A549 (cell line): ENCODE measurements at regions of chr4 and their contacts with region 1.

Region 1: GRCh38 chr4:158253350-158253980 is 43.2 kb downstream of the TMEM144 start:
- DNase-seq: peak; percentile 13 to 39
- ATAC-seq: peak; percentile 90 to 91
- H3K4me3 ChIP-seq: no peak overlapping the region
- H3K27ac ChIP-seq: no peak overlapping the region
- H3K4me1 ChIP-seq: no peaks in the 10 kb centered on the region
- CTCF ChIP-seq: peak; percentile 49
- EP300 ChIP-seq: no peak
- POLR2A ChIP-seq: no peak
- RAD21 ChIP-seq: peak; percentile 66 to 74

Region 2: DNA sequence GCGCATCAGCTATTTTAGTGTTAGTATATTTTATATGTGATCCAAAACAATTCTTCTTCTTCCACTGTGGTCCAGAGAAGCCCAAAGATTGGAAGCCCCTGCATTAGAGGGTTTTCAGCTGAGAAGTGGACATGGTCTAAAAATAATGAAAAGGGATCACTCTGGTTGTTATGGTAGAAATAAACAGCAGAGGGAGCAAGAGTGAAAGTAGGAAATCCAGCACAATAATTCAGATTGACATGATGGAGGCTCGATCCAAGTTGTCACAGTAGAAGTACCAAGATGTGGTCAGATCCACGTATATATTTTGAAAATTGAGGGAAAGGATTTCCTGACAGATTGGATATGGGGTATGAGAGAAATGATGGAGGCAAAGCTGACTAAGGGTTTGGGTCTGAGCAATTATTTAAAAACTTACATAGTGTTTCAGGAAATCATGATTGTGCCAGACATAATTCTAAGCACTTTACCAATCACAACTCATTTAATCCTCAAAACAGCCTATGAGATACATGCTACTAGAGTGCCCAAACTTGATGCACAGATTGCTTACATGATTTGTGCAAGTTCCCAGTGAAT is 60.2 kb before region 1 on chr4:
- CTCF ChIA-PET with region 1: interaction called, 14 read pairs
- POLR2A ChIA-PET with region 1: no interaction called
- DNase-seq: peak; percentile 28 to 43
- ATAC-seq: peak; percentile 74; a peak in 5 of 6 replicates
- H3K4me3 ChIP-seq: no peak overlapping the region
- H3K27ac ChIP-seq: no peak overlapping the region
- H3K4me1 ChIP-seq: no peaks in the 10 kb centered on the region
- CTCF ChIP-seq: peak; percentile 48; the same call in 2 of the 3 replicates
- EP300 ChIP-seq: no peak
- POLR2A ChIP-seq: no peak
- RAD21 ChIP-seq: peak; percentile 43 to 44; a peak in 4 of 5 replicates